ENCODE measurements at regions of chr6 and their contacts with region 1.

Region 1: DNA sequence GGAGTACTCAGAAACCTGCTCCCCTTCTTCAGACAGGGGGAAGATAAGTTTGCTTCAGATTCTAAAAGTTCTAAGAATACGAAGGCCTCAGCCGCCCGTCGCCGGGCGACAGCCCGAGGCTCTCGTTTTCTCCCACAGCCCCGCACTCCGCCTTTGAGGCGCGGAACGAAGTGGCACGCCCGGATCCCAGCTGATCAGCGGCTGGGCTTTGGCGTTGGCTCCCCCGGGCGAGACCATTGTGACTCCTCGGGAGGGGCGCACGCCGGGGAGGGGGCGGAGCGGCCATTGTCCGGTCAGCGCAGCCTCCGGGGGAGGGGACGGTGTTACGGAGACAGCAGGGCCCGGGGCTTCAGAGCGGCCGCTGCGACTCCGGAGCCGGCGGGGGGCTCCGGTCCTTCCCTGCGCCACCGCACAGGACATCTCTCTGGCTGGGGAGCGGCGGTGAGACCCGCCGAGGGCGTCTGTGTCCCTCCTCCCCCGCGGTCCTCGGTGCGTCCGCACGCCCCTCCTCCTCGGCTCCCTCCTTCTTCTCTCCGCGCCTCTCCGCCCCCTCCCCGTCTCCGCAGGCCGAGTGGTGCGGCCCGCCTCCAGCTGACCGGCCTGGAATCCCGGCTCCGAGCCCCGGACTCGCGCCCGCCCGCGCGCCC is at the start of gene ZFAND3:
- DNase-seq: peak; percentile 92 to 98 (median 96)
- H3K4me3 ChIP-seq: peak within 1 kb of the TSS; percentile 80 to 90
- H3K4me3 Mint-ChIP-seq: peak within 1 kb of the TSS; percentile 96 to 99 (median 98)
- H3K27ac ChIP-seq: peak within 1 kb of the TSS; percentile 82
- H3K27ac Mint-ChIP-seq: peak within 1 kb of the TSS; percentile 99 to 100 (median 99)
- H3K4me1 ChIP-seq: peaks cover 44% of the 10 kb centered on the region
- H3K4me1 Mint-ChIP-seq: peaks cover 36 to 66% (median 50%) of the 10 kb centered on the region in 4 donors
- H3K27me3 ChIP-seq: no peaks in the 10 kb centered on the region
- H3K27me3 Mint-ChIP-seq: no peaks in the 10 kb centered on the region
- total RNA-seq, gene ZFAND3: 32.7 to 33.0 TPM

Region 2: GRCh38 chr6:37432916-37433656 is 386.2 kb before region 1 on chr6 and contains the start of gene CMTR1:
- CTCF ChIA-PET with region 1: no interaction called
- POLR2A ChIA-PET with region 1: interaction called, 6 read pairs
- intact Hi-C with region 1: loop called (anchors 5 kb)
- DNase-seq: peak; percentile 97 to 98 (median 97)
- H3K4me3 ChIP-seq: peak within 1 kb of the TSS; percentile 61 to 95
- H3K4me3 Mint-ChIP-seq: peak within 1 kb of the TSS; percentile 92 to 98 (median 93)
- H3K27ac ChIP-seq: peak within 1 kb of the TSS; percentile 96
- H3K27ac Mint-ChIP-seq: peak within 1 kb of the TSS; percentile 95 to 100 (median 97)
- H3K4me1 ChIP-seq: peaks cover 32% of the 10 kb centered on the region
- H3K4me1 Mint-ChIP-seq: peaks cover 24 to 52% (median 40%) of the 10 kb centered on the region in 4 donors
- H3K27me3 ChIP-seq: no peaks in the 10 kb centered on the region
- H3K27me3 Mint-ChIP-seq: peaks cover 3 to 5% of the 10 kb centered on the region in 2 donors
- total RNA-seq, gene CMTR1: 75.0 to 79.1 TPM

Region 3: GRCh38 chr6:37698261-37699137 is 120.8 kb before region 1 on chr6:
- CTCF ChIA-PET with region 1: no interaction called
- POLR2A ChIA-PET with region 1: interaction called, 5 read pairs
- intact Hi-C with region 1: loop called (anchors 2 kb)
- DNase-seq: peak; percentile 66 to 85 (median 74)
- H3K4me3 ChIP-seq: peak overlapping the region; percentile 47 to 60
- H3K4me3 Mint-ChIP-seq: peak overlapping the region; percentile 92 to 100 (median 100)
- H3K27ac ChIP-seq: peak overlapping the region; percentile 33
- H3K27ac Mint-ChIP-seq: peak overlapping the region; percentile 92 to 100 (median 98)
- H3K4me1 ChIP-seq: peaks cover 17% of the 10 kb centered on the region
- H3K4me1 Mint-ChIP-seq: peaks cover 17 to 52% (median 26%) of the 10 kb centered on the region in 4 donors
- H3K27me3 ChIP-seq: peaks cover 14% of the 10 kb centered on the region
- H3K27me3 Mint-ChIP-seq: peaks cover 0 to 6% of the 10 kb centered on the region in 2 donors

Region 4: DNA sequence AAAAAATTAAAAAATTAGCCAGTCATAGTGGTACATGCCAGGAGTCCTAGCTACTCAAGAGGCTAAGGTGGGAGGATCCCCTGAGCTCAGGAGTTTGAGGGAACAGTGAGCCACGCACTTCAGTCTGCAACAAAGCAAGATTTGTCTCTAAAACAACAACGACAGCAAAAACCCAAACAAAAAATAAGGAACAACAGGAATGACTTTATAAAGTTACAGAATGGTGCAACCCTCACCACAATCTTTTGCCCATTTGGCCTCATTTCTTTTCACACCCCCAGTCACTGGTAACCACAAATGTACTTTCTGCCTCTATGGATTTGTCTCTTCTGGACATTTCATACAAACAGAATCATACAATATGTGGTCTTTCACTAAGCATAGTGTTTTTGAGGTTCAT is 16.5 kb before region 1 on chr6:
- CTCF ChIA-PET with region 1: no interaction called
- POLR2A ChIA-PET with region 1: interaction called, 13 read pairs
- intact Hi-C with region 1: no loop called
- DNase-seq: no peak
- H3K4me3 ChIP-seq: no peak overlapping the region
- H3K4me3 Mint-ChIP-seq: no peak overlapping the region
- H3K27ac ChIP-seq: no peak overlapping the region
- H3K27ac Mint-ChIP-seq: no peak overlapping the region
- H3K4me1 ChIP-seq: no peaks in the 10 kb centered on the region
- H3K4me1 Mint-ChIP-seq: peaks cover 0 to 6% (median 1%) of the 10 kb centered on the region in 4 donors
- H3K27me3 ChIP-seq: no peaks in the 10 kb centered on the region
- H3K27me3 Mint-ChIP-seq: peaks cover 0 to 2% of the 10 kb centered on the region in 2 donors

Region 5: GRCh38 chr6:38639498-38640215 is 820.4 kb after region 1 on chr6 and contains the start of gene BTBD9:
- CTCF ChIA-PET with region 1: no interaction called
- POLR2A ChIA-PET with region 1: interaction called, 11 read pairs
- intact Hi-C with region 1: loop called (anchors 1 kb)
- DNase-seq: peak; percentile 87 to 92 (median 90)
- H3K4me3 ChIP-seq: peak within 1 kb of the TSS; percentile 90 to 100
- H3K4me3 Mint-ChIP-seq: peak within 1 kb of the TSS; percentile 86 to 95 (median 93)
- H3K27ac ChIP-seq: peak within 1 kb of the TSS; percentile 97
- H3K27ac Mint-ChIP-seq: peak within 1 kb of the TSS; percentile 97 to 99 (median 98)
- H3K4me1 ChIP-seq: peaks cover 44% of the 10 kb centered on the region
- H3K4me1 Mint-ChIP-seq: peaks cover 31 to 64% (median 49%) of the 10 kb centered on the region in 4 donors
- H3K27me3 ChIP-seq: no peaks in the 10 kb centered on the region
- H3K27me3 Mint-ChIP-seq: no peaks in the 10 kb centered on the region
- total RNA-seq, gene BTBD9: 39.7 to 40.4 TPM